ENCODE measurements at regions of chr14 and their contacts with region 1.

Region 1: GRCh38 chr14:65824285-65824977 is 411.9 kb downstream of the FUT8 start:
- DNase-seq: peak; percentile 21
- H3K4me3 ChIP-seq: no peak overlapping the region
- CTCF ChIP-seq: peak; percentile 87

Region 2: GRCh38 chr14:65486868-65487267 is 337.6 kb before region 1 on chr14:
- CTCF ChIA-PET with region 1: interaction called, 12 read pairs
- POLR2A ChIA-PET with region 1: no interaction called
- DNase-seq: no peak
- H3K4me3 ChIP-seq: no peak overlapping the region
- CTCF ChIP-seq: no peak

Region 3: DNA sequence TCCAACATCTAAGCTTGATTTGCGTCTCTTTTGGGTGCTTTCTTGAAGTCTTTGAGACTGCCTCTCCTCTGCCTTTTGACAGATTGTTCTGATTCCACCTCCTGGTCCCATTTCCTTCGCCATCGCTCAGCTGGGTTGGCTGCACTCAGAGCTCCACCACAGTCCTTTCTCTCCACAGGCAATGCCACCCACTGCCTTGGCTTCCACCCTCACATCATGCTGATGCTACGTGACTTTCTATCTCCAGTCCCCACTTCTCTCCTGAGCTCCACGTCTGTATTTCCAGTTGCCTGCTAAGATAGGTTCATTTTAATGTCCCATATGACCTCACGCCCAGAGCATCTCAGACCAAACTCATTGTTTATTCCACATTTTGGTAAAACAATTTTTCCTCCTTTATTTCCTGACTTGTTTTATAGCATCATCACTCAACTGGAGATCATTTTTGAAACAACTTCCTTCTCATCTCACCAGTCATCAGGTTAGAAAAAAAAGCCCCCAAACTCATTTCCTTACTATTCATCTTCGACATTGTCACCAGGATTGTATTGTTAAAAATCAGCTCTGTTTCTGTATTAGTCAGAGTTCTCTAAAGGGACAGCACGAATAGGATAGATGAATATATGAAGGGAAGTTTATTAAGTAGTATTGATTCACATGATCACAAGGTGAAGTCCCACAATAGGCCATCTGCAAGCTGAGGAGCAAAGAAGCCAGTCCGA is 19.5 kb before region 1 on chr14:
- CTCF ChIA-PET with region 1: interaction called, 79 read pairs
- POLR2A ChIA-PET with region 1: no interaction called
- DNase-seq: no peak
- H3K4me3 ChIP-seq: no peak overlapping the region
- CTCF ChIP-seq: no peak

Region 4: GRCh38 chr14:65838565-65838964 is 14.1 kb after region 1 on chr14:
- CTCF ChIA-PET with region 1: interaction called, 22 read pairs
- POLR2A ChIA-PET with region 1: no interaction called
- DNase-seq: no peak
- H3K4me3 ChIP-seq: no peak overlapping the region
- CTCF ChIP-seq: no peak

Region 5: GRCh38 chr14:65958664-65959562 is 134.5 kb after region 1 on chr14:
- CTCF ChIA-PET with region 1: interaction called, 12 read pairs
- POLR2A ChIA-PET with region 1: no interaction called
- DNase-seq: no peak
- H3K4me3 ChIP-seq: no peak overlapping the region
- CTCF ChIP-seq: peak; percentile 18

Measured in AG04449 (cell line).